Caco-2 (cell line): ENCODE measurements at regions of chr15 and their contacts with region 1.

Region 1: GRCh38 chr15:23629234-23629805 is 18.3 kb downstream of the MAGEL2 start:
- DNase-seq: no peak
- H3K4me3 ChIP-seq: peak overlapping the region; percentile 14
- H3K4me3 Mint-ChIP-seq: peak overlapping the region; percentile 59
- H3K27ac Mint-ChIP-seq: no peak overlapping the region
- H3K4me1 ChIP-seq: peaks cover 6% of the 10 kb centered on the region; the same call in 1 of the 2 replicates
- H3K4me1 Mint-ChIP-seq: peaks cover 7% of the 10 kb centered on the region
- H3K27me3 ChIP-seq: no peaks in the 10 kb centered on the region
- H3K27me3 Mint-ChIP-seq: peaks cover 4% of the 10 kb centered on the region
- CTCF ChIP-seq: peak; percentile 24 to 55

Region 2: GRCh38 chr15:23472678-23473077 is 156.6 kb before region 1 on chr15:
- CTCF ChIA-PET with region 1: no interaction called
- POLR2A ChIA-PET with region 1: no interaction called
- intact Hi-C with region 1: no loop called
- DNase-seq: no peak
- H3K4me3 ChIP-seq: no peak overlapping the region
- H3K4me3 Mint-ChIP-seq: no peak overlapping the region
- H3K27ac Mint-ChIP-seq: no peak overlapping the region
- H3K4me1 ChIP-seq: no peaks in the 10 kb centered on the region
- H3K4me1 Mint-ChIP-seq: no peaks in the 10 kb centered on the region
- H3K27me3 ChIP-seq: no peaks in the 10 kb centered on the region
- H3K27me3 Mint-ChIP-seq: peaks cover 4% of the 10 kb centered on the region
- CTCF ChIP-seq: no peak

Region 3: DNA sequence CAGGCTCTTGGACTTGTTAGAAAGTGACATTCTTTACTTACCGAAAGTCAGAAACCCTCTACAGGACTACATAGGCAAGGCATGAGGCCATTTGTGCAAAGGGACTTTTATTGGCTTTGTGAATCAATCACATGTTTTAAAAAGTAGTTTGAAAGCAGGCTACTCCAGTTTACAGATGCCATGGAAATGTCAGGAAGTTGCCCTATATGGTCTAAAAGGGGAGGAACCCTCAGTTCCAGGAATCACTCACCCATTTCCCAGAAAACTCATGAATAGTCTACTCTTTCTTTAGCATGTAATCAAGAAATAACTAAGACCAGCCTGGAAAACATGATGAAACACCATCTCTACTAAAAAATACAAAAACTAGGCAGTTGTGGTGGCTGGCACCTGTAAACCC is 114.8 kb before region 1 on chr15:
- CTCF ChIA-PET with region 1: no interaction called
- POLR2A ChIA-PET with region 1: no interaction called
- intact Hi-C with region 1: loop called (anchors 5 kb)
- DNase-seq: no peak
- H3K4me3 ChIP-seq: no peak overlapping the region
- H3K4me3 Mint-ChIP-seq: no peak overlapping the region
- H3K27ac Mint-ChIP-seq: no peak overlapping the region
- H3K4me1 ChIP-seq: peaks cover 10% of the 10 kb centered on the region
- H3K4me1 Mint-ChIP-seq: no peaks in the 10 kb centered on the region
- H3K27me3 ChIP-seq: no peaks in the 10 kb centered on the region; the same call in 1 of the 2 replicates
- H3K27me3 Mint-ChIP-seq: peaks cover 3% of the 10 kb centered on the region
- CTCF ChIP-seq: no peak

Region 4: DNA sequence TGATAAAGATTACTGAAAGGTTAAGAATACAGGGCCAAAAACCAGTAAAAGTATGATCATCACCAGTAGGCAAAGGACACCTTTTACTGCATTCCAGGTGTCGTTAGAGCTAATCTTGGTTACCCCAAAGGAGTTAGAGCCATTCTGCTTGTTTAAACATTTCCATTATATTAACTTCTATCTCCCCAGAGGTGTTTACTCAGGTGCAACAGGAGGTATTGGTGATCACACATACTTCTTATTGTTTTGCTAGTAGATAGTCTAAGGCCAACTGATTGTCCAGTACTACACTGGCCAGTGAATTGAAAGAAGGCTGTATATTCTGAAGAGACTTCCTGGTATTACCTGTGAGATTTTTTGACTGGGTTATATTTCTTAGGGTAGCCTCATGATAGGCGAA is 41.1 kb before region 1 on chr15:
- CTCF ChIA-PET with region 1: no interaction called
- POLR2A ChIA-PET with region 1: no interaction called
- intact Hi-C with region 1: loop called (anchors 5 kb)
- DNase-seq: peak in 1 of 2 experiments; percentile 20
- H3K4me3 ChIP-seq: no peak overlapping the region
- H3K4me3 Mint-ChIP-seq: peak overlapping the region; percentile 4
- H3K27ac Mint-ChIP-seq: peak overlapping the region; percentile 37
- H3K4me1 ChIP-seq: peaks cover 6% of the 10 kb centered on the region; the same call in 1 of the 2 replicates
- H3K4me1 Mint-ChIP-seq: peaks cover 18% of the 10 kb centered on the region
- H3K27me3 ChIP-seq: no peaks in the 10 kb centered on the region
- H3K27me3 Mint-ChIP-seq: no peaks in the 10 kb centered on the region
- CTCF ChIP-seq: no peak

Region 5: GRCh38 chr15:23648920-23649515 is 19.7 kb after region 1 on chr15:
- CTCF ChIA-PET with region 1: no interaction called
- POLR2A ChIA-PET with region 1: no interaction called
- intact Hi-C with region 1: no loop called
- DNase-seq: peak; percentile 45 to 66
- H3K4me3 ChIP-seq: no peak overlapping the region
- H3K4me3 Mint-ChIP-seq: no peak overlapping the region
- H3K27ac Mint-ChIP-seq: no peak overlapping the region
- H3K4me1 ChIP-seq: no peaks in the 10 kb centered on the region
- H3K4me1 Mint-ChIP-seq: no peaks in the 10 kb centered on the region
- H3K27me3 ChIP-seq: no peaks in the 10 kb centered on the region
- H3K27me3 Mint-ChIP-seq: peaks cover 15% of the 10 kb centered on the region
- CTCF ChIP-seq: peak; percentile 68 to 85

Region 6: DNA sequence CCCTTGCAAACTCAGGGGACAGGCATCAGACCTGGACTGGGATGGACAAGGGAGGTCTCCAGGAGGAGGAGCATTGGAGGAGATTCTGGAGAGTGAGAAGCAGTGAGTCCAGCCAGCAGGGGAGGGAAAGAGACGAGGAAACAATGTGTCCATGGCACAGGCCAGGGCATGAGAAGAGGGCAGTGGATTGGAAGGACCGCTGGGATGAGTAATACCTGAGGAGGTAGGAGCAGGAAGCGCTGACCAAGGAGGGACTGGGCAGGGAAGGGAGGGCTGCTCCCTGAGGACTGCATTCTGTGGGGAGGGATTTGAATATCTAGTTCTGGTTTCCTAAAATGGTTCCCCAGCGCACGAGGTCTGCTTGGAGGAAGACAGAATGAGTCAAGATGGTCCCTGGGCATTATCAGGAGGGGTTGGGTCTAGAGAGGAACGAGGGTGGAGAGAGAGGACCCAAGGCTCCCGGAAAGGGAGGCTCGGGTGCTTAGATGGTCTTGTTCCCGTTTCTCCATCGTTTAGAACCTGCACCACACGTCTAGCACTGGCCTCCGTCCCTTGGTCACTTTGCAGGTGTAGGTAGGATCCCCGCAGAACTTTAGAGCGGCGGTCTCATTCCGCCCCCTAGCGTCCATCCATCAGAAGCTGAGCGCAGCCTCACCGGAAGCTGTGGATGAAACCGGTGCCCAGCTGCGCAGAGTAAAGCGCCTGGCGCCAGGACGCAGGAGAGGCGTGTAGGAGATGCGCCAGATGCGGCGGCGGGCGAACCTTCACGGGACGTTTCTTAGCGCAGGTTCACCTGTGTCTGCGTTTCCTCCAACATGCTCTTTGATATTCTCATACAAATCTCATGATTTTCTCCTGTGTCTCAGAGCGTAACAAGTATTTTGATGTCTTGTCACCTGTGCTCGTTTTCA is 248.4 kb after region 1 on chr15:
- CTCF ChIA-PET with region 1: interaction called, 3 read pairs
- POLR2A ChIA-PET with region 1: no interaction called
- intact Hi-C with region 1: loop called (anchors 5 kb)
- DNase-seq: peak; percentile 60 to 74
- H3K4me3 ChIP-seq: no peak overlapping the region
- H3K4me3 Mint-ChIP-seq: no peak overlapping the region
- H3K27ac Mint-ChIP-seq: no peak overlapping the region
- H3K4me1 ChIP-seq: no peaks in the 10 kb centered on the region
- H3K4me1 Mint-ChIP-seq: peaks cover 7% of the 10 kb centered on the region
- H3K27me3 ChIP-seq: no peaks in the 10 kb centered on the region
- H3K27me3 Mint-ChIP-seq: peaks cover 4% of the 10 kb centered on the region
- CTCF ChIP-seq: peak; percentile 59 to 73

Region 7: GRCh38 chr15:24318981-24319380 is 689.7 kb after region 1 on chr15:
- CTCF ChIA-PET with region 1: no interaction called
- POLR2A ChIA-PET with region 1: no interaction called
- intact Hi-C with region 1: loop called (anchors 10 kb)
- DNase-seq: no peak
- H3K4me3 ChIP-seq: no peak overlapping the region
- H3K4me3 Mint-ChIP-seq: no peak overlapping the region
- H3K27ac Mint-ChIP-seq: no peak overlapping the region
- H3K4me1 ChIP-seq: no peaks in the 10 kb centered on the region
- H3K4me1 Mint-ChIP-seq: no peaks in the 10 kb centered on the region
- H3K27me3 ChIP-seq: no peaks in the 10 kb centered on the region
- H3K27me3 Mint-ChIP-seq: no peaks in the 10 kb centered on the region
- CTCF ChIP-seq: no peak